ENCODE measurements at regions of chr13 and their contacts with region 1.

Region 1: GRCh38 chr13:39623466-39623865 is 20.5 kb upstream of the LHFPL6 start:
- ATAC-seq: no peak
- H3K4me3 ChIP-seq: no peak overlapping the region
- H3K27ac ChIP-seq: no peak overlapping the region
- H3K4me1 ChIP-seq: no peaks in the 10 kb centered on the region

Region 2: DNA sequence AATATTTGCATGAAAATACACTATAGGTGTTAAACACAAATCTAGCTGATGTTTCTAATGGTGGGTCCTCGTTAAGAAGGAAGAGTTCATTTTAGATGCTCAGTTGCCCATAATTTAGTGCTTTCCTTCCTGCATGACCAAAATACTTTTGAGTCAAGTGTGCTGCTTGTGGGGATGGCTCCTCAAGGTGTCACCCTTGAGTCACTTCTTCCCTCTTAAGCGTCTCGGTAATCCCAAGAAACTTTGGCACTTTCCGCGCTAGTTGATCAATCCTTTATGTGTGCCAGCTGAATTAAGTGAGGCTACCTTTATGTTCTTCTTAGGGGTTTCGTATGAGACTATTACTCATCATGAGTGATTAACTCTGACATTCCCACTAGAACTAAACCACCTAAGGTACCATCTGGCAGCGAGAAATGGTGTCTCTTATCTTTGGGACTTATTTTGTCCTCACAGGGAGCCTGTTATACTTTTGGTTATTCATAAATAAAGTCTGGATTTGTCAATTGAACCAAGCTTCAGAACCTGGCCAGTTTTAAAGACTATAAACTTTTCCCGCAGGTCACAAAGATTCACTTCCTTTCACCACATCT is 478.4 kb before region 1 on chr13:
- in situ Hi-C with region 1: loop called in 8 of 9 experiments (anchors 10 to 25 kb)
- ATAC-seq: peak in 6 of 8 experiments; percentile 37 to 79 (median 45)
- H3K4me3 ChIP-seq: no peak overlapping the region
- H3K27ac ChIP-seq: no peak overlapping the region
- H3K4me1 ChIP-seq: no peaks in the 10 kb centered on the region